Activated T-helper 2 cell treated with anti-CD3 and anti-CD28 coated beads, Interferon-gamma antibody, Interleukin-2, Interleukin-4, amounts not matched to agents 10 μg/mL and 5 μg/mL and 100 μg/mL, durations not matched to agents 14 hours and 24 hours and 36 hours (primary cell): ENCODE measurements at regions of chr6 and their contacts with region 1.

Region 1: GRCh38 chr6:5003604-5004372 is at the start of gene RPP40:
- DNase-seq: peak; percentile 97
- H3K4me3 Mint-ChIP-seq: peak within 1 kb of the TSS; percentile 91
- H3K27ac Mint-ChIP-seq: peak within 1 kb of the TSS; percentile 96
- H3K4me1 Mint-ChIP-seq: peaks cover 7% of the 10 kb centered on the region
- H3K27me3 Mint-ChIP-seq: no peaks in the 10 kb centered on the region
- total RNA-seq, gene RPP40: 11.7 and 12.2 TPM in 2 replicates

Region 2: GRCh38 chr6:5030596-5031136 is 26.9 kb after region 1 on chr6:
- intact Hi-C with region 1: loop called (anchors 1 kb)
- DNase-seq: peak; percentile 68
- H3K4me3 Mint-ChIP-seq: no peak overlapping the region
- H3K27ac Mint-ChIP-seq: no peak overlapping the region
- H3K4me1 Mint-ChIP-seq: peaks cover 7% of the 10 kb centered on the region
- H3K27me3 Mint-ChIP-seq: peaks cover 4% of the 10 kb centered on the region